CD8-positive, alpha-beta T cell (primary cell): ENCODE measurements at regions of chr6 and their contacts with region 1.

Region 1: GRCh38 chr6:26473758-26474438 is 16.1 kb downstream of the BTN2A1 start:
- DNase-seq: peak; percentile 63 to 96 (median 79)
- ATAC-seq: peak; percentile 93
- H3K4me3 ChIP-seq: peak overlapping the region; percentile 64 to 75
- H3K4me3 Mint-ChIP-seq: peak overlapping the region; percentile 93
- H3K27ac ChIP-seq: peak overlapping the region; percentile 82 to 98
- H3K27ac Mint-ChIP-seq: peak overlapping the region; percentile 99
- H3K4me1 ChIP-seq: peaks cover 39% of the 10 kb centered on the region
- H3K4me1 Mint-ChIP-seq: peaks cover 50% of the 10 kb centered on the region
- H3K27me3 ChIP-seq: no peaks in the 10 kb centered on the region
- H3K27me3 Mint-ChIP-seq: no peaks in the 10 kb centered on the region
- CTCF ChIP-seq: no peak

Region 2: DNA sequence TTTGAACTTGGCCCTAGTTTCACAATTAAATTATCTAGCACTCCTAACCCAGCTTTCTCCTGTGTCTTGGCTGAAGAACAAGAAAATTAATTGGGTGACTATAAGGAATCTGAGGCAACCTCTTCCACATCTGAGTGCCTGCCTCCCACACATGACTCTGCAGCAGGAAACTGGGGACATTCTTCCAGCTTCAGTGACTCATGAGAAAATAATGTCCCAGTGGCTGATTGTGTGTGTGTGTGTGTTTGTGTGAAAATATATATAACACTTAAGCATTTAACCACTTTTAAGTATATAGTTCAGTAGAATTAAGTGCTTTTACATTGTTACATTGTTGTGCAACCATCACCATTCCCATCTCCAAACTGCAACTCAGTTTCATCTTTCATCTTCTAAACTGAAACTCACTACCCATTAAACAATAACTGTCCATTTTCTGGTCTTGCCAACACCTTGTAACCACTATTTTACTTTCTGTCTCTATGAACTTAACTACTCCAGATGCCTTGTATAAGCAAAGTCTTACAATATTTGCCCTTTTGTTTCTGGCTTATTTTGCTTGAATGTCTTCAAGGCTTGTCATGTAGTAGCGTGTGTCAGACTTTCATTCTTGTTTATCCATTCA is 502.6 kb before region 1 on chr6:
- CTCF ChIA-PET with region 1: no interaction called
- POLR2A ChIA-PET with region 1: no interaction called
- intact Hi-C with region 1: no loop called
- DNase-seq: no peak
- ATAC-seq: no peak
- H3K4me3 ChIP-seq: no peak overlapping the region
- H3K4me3 Mint-ChIP-seq: no peak overlapping the region
- H3K27ac ChIP-seq: no peak overlapping the region
- H3K27ac Mint-ChIP-seq: peak overlapping the region; percentile 15
- H3K4me1 ChIP-seq: peaks cover 26% of the 10 kb centered on the region
- H3K4me1 Mint-ChIP-seq: peaks cover 66% of the 10 kb centered on the region
- H3K27me3 ChIP-seq: no peaks in the 10 kb centered on the region
- H3K27me3 Mint-ChIP-seq: no peaks in the 10 kb centered on the region
- CTCF ChIP-seq: no peak

Region 3: DNA sequence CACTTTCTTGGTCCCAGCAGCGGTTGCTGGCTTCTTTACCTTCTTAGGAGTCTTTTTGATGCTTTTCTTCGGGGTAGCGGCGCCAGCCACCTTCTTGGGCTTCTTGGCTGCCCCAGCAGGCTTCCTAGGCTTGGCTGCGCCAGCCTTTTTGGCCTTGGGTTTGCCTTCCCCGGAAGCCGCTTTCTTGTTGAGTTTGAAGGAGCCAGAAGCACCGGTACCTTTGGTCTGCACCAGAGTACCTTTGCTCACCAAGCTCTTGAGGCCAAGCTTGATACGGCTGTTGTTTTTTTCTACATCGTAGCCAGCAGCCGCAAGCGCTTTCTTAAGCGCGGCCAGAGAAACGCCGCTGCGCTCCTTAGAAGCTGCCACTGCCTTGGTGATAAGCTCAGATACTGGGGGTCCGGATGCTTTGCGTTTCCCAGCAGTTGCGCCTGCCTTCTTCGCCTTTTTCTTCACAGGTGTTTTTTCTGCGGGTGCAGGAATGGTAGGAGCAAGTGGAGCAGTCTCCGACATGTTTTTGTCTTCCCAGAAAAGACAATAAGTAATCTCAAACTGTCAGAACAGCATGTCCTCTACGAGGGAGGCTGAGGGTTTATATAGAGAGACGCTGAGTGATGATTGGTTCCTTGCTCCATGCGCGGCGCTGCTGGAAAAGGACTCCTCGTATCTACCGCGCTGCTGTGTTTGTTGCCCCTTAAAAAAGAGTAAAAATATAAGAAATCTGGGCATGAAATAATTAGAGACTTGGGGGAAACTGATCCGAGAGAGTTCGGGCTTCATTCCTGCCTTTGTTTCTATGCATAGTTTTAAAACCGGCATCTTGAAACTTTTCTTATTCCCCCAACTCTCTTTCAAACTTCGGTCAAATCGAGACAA is 239.2 kb before region 1 on chr6:
- CTCF ChIA-PET with region 1: no interaction called
- POLR2A ChIA-PET with region 1: interaction called, 13 read pairs
- intact Hi-C with region 1: no loop called
- DNase-seq: peak; percentile 55 to 88 (median 66)
- ATAC-seq: peak; percentile 63
- H3K4me3 ChIP-seq: peak overlapping the region; percentile 66 to 76
- H3K4me3 Mint-ChIP-seq: peak overlapping the region; percentile 85
- H3K27ac ChIP-seq: peak overlapping the region; percentile 84 to 92
- H3K27ac Mint-ChIP-seq: peak overlapping the region; percentile 93
- H3K4me1 ChIP-seq: peaks cover 14% of the 10 kb centered on the region
- H3K4me1 Mint-ChIP-seq: peaks cover 31% of the 10 kb centered on the region
- H3K27me3 ChIP-seq: no peaks in the 10 kb centered on the region
- H3K27me3 Mint-ChIP-seq: no peaks in the 10 kb centered on the region
- CTCF ChIP-seq: no peak

Region 4: DNA sequence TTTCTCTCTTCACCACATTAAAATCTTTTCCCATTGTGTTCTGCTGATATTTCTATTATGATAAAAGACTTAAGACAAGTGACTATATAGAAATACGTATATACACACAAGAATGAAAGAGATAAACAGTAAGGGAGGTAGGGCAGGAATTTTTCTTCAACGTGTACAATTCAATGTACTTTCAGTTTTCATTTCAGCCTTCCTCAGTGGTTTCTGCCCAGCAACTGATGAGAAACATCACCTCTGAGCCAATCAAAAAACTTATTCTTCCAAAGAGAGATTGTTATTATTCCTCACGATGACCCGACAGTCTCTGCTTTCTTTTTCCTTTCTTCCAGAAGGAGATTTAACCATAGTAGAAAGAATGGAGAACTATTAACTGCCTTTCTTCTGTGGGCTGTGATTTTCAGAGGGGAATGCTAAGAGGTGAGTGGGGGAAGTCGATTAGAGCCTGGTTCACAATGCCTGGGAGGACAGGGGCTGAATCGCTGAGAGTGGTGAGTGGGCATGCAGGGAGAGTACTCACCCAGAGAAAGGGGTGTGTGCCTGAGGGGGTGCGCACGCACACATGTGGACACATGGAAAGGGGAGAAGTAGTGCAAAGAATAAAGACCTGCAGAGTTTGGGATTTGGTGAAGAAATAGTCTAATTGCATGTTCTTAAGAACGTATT is 71.8 kb before region 1 on chr6 and contains the start of gene BTN3A1:
- CTCF ChIA-PET with region 1: no interaction called
- POLR2A ChIA-PET with region 1: interaction called, 3 read pairs
- intact Hi-C with region 1: loop called (anchors 2 to 5 kb)
- DNase-seq: peak; percentile 22 to 90 (median 65)
- ATAC-seq: peak; percentile 88
- H3K4me3 ChIP-seq: peak within 1 kb of the TSS; percentile 82 to 91
- H3K4me3 Mint-ChIP-seq: peak within 1 kb of the TSS; percentile 92
- H3K27ac ChIP-seq: peak within 1 kb of the TSS; percentile 92 to 97
- H3K27ac Mint-ChIP-seq: peak within 1 kb of the TSS; percentile 99
- H3K4me1 ChIP-seq: peaks cover 42% of the 10 kb centered on the region
- H3K4me1 Mint-ChIP-seq: peaks cover 50% of the 10 kb centered on the region
- H3K27me3 ChIP-seq: no peaks in the 10 kb centered on the region
- H3K27me3 Mint-ChIP-seq: no peaks in the 10 kb centered on the region
- CTCF ChIP-seq: no peak
- total RNA-seq, gene BTN3A1: 97.0 to 104 TPM

Region 5: GRCh38 chr6:26457806-26458688 is 15.9 kb before region 1 on chr6 and contains the start of gene BTN2A1:
- CTCF ChIA-PET with region 1: interaction called, 6 read pairs
- POLR2A ChIA-PET with region 1: interaction called, 11 read pairs
- intact Hi-C with region 1: loop called (anchors 1 kb)
- DNase-seq: peak; percentile 33 to 93 (median 65)
- ATAC-seq: peak; percentile 96
- H3K4me3 ChIP-seq: peak within 1 kb of the TSS; percentile 64 to 78
- H3K4me3 Mint-ChIP-seq: peak within 1 kb of the TSS; percentile 100
- H3K27ac ChIP-seq: peak within 1 kb of the TSS; percentile 61 to 92
- H3K27ac Mint-ChIP-seq: peak within 1 kb of the TSS; percentile 99
- H3K4me1 ChIP-seq: peaks cover 48% of the 10 kb centered on the region
- H3K4me1 Mint-ChIP-seq: peaks cover 68% of the 10 kb centered on the region
- H3K27me3 ChIP-seq: no peaks in the 10 kb centered on the region
- H3K27me3 Mint-ChIP-seq: no peaks in the 10 kb centered on the region
- CTCF ChIP-seq: no peak
- total RNA-seq, gene BTN2A1: 16.4 to 17.3 TPM

Region 6: DNA sequence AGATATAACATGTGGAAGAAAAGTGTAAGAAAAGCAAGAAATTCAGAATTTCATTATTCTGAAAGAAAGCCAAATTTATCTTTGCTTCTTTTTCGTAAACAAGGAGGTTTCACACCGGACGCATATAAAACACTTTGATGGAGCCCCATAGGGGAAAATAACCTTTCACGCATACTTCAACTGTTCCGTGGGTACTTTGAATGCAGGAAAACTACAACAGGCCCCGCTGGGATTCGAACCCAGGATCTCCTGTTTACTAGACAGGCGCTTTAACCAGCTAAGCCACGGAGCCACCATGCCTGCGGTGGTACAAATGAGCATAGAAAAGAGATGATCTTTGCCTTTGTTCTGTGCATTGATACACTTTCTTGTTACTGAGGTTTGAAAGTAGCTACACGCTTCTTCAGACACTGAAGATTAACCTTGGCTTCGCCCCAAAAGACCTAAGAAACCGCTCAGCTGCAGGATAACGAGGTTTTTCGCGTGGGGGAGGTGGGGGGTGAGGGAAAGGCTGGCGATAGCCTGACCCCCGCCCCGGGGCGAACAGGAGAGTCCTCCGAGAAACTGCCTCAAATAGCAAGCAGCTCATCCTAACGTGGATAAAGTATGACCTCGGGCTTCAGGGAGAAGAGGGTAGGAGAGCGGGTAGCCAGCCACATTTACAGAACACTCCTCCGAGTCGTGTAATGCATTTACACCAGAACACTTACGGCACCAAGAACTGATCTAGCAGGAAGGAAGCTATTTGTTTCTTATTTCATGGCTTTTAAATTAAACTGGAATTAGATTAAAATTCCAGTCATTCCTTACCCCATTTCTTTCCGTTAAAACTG is 59.0 kb after region 1 on chr6:
- CTCF ChIA-PET with region 1: interaction called, 4 read pairs
- POLR2A ChIA-PET with region 1: interaction called, 36 read pairs
- intact Hi-C with region 1: loop called (anchors 1 to 2 kb)
- DNase-seq: peak; percentile 82 to 97 (median 91)
- ATAC-seq: peak; percentile 35
- H3K4me3 ChIP-seq: peak overlapping the region; percentile 69 to 80
- H3K4me3 Mint-ChIP-seq: peak overlapping the region; percentile 100
- H3K27ac ChIP-seq: peak overlapping the region; percentile 53 to 57
- H3K27ac Mint-ChIP-seq: peak overlapping the region; percentile 97
- H3K4me1 ChIP-seq: peaks cover 25% of the 10 kb centered on the region
- H3K4me1 Mint-ChIP-seq: peaks cover 52% of the 10 kb centered on the region
- H3K27me3 ChIP-seq: no peaks in the 10 kb centered on the region
- H3K27me3 Mint-ChIP-seq: peaks cover 2% of the 10 kb centered on the region
- CTCF ChIP-seq: no peak